ENCODE measurements at regions of chr5 and their contacts with region 1.

Region 1: GRCh38 chr5:144370273-144370672 is 199.6 kb downstream of the KCTD16 start:
- DNase-seq: no peak
- ATAC-seq: no peak
- H3K4me3 ChIP-seq: no peak overlapping the region
- H3K27ac ChIP-seq: no peak overlapping the region
- H3K4me1 ChIP-seq: no peaks in the 10 kb centered on the region
- H3K27me3 ChIP-seq: peaks cover 0 to 5% (median 0%) of the 10 kb centered on the region in 7 donors
- CTCF ChIP-seq: no peak

Region 2: DNA sequence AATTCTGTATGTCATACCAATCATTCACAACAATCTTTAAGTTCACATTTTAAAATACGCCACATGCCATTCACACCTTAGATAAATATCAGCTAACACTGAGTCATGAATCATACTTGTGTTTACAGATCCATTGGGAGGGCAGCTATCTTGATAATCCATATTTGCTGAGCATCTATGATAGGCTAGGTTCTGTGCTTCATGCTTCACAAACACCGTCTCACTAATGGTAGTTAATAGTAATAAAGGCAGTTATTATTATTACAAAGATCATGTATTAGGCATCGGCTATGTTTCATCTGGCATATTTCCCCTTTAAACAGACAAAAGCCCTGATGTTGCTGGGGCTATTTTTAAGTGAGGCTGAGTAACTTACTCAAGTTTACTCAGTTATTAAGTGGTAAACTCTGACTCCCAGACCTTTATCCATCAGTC is 710.5 kb before region 1 on chr5:
- intact Hi-C with region 1: loop called in 1 of 10 experiments (anchors 5 kb)
- DNase-seq: no peak
- ATAC-seq: no peak
- H3K4me3 ChIP-seq: no peak overlapping the region
- H3K27ac ChIP-seq: no peak overlapping the region
- H3K4me1 ChIP-seq: no peaks in the 10 kb centered on the region
- H3K27me3 ChIP-seq: no peaks in the 10 kb centered on the region
- CTCF ChIP-seq: no peak

Region 3: DNA sequence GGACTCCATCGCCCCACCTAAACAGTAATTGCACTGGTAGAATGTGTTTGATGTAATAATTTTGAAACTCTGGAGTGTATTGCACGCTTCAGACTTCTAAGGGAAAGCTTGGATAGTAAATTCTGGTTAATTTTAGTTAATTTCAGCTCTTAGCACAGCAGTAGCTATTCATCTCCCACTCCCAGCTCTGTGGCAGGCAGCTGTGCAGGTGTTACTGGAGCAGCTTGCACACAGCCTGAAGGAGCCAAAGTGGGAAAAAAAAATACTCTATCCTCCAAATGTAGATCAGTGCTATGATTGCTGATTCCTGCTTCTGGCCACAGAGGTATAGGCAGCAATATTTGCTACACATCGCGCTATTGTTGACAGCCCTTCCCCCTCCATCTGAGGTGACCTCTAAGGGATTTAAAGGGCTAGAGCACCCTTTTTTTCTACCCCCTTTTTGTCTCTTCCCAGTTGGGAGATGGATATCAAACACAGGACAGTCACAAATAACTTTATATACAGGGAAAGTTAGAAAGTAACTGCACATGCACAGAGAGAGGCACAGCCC is 102.2 kb before region 1 on chr5:
- intact Hi-C with region 1: no loop called
- DNase-seq: no peak
- ATAC-seq: no peak
- H3K4me3 ChIP-seq: no peak overlapping the region
- H3K27ac ChIP-seq: no peak overlapping the region
- H3K4me1 ChIP-seq: no peaks in the 10 kb centered on the region
- H3K27me3 ChIP-seq: peaks cover 0 to 12% (median 0%) of the 10 kb centered on the region in 7 donors
- CTCF ChIP-seq: no peak

Region 4: GRCh38 chr5:144308906-144309670 is 61.2 kb before region 1 on chr5:
- intact Hi-C with region 1: no loop called
- DNase-seq: no peak
- ATAC-seq: no peak
- H3K4me3 ChIP-seq: no peak overlapping the region
- H3K27ac ChIP-seq: no peak overlapping the region
- H3K4me1 ChIP-seq: peaks cover 0 to 8% (median 0%) of the 10 kb centered on the region in 9 donors
- H3K27me3 ChIP-seq: peaks cover 0 to 3% (median 0%) of the 10 kb centered on the region in 7 donors
- CTCF ChIP-seq: no peak

Region 5: GRCh38 chr5:144436007-144436406 is 65.7 kb after region 1 on chr5:
- intact Hi-C with region 1: no loop called
- DNase-seq: no peak
- ATAC-seq: no peak
- H3K4me3 ChIP-seq: no peak overlapping the region
- H3K27ac ChIP-seq: no peak overlapping the region
- H3K4me1 ChIP-seq: peaks cover 0 to 8% (median 0%) of the 10 kb centered on the region in 9 donors
- H3K27me3 ChIP-seq: no peaks in the 10 kb centered on the region
- CTCF ChIP-seq: no peak

Measured in heart right ventricle (tissue), 16 donors.